HepG2 (cell line): ENCODE measurements at regions of chr12 and their contacts with region 1.

Region 1: DNA sequence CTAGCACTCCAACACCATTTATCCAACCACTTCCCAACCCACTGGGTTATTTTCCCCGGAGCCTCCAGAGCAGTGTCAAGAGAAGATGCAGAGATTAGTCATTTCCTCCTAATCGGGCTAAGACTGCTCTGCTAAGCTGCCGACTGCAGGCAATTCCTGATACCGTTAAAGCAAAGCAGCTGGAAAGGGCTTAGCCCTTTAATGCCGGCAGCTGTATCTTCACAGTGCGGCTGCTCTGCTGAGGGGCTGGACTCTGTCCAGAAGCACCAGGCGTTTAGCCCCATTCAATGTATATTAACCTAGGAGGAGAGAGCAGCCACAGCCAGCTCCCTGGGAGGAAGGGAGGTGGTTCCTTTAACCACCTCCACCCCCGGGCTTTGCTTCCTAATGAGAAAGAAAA is 11.1 kb downstream of the AQP6 start:
- DNase-seq: no peak
- ATAC-seq: no peak
- H3K4me3 ChIP-seq: no peak overlapping the region
- H3K27ac ChIP-seq: no peak overlapping the region
- H3K4me1 ChIP-seq: peaks cover 70% of the 10 kb centered on the region
- H3K27me3 ChIP-seq: no peaks in the 10 kb centered on the region
- CTCF ChIP-seq: no peak
- EP300 ChIP-seq: no peak
- POLR2A ChIP-seq: no peak
- RAD21 ChIP-seq: no peak

Region 2: GRCh38 chr12:49967042-49967776 is 16.7 kb before region 1 on chr12:
- CTCF ChIA-PET with region 1: no interaction called
- POLR2A ChIA-PET with region 1: interaction called, 24 read pairs
- in situ Hi-C with region 1: no loop called
- intact Hi-C with region 1: loop called (anchors 1 kb)
- DNase-seq: peak; percentile 71
- ATAC-seq: peak; percentile 79
- H3K4me3 ChIP-seq: peak overlapping the region; percentile 33 to 69 (median 40); a peak in 5 of 6 replicates
- H3K27ac ChIP-seq: no peak overlapping the region
- H3K4me1 ChIP-seq: peaks cover 54% of the 10 kb centered on the region
- H3K27me3 ChIP-seq: peaks cover 5 to 65% of the 10 kb centered on the region in 2 experiments
- CTCF ChIP-seq: peak; percentile 91
- EP300 ChIP-seq: no peak
- POLR2A ChIP-seq: no peak
- RAD21 ChIP-seq: peak; percentile 91

Region 3: GRCh38 chr12:50024805-50025186 is 40.9 kb after region 1 on chr12:
- CTCF ChIA-PET with region 1: no interaction called
- POLR2A ChIA-PET with region 1: interaction called, 5 read pairs
- in situ Hi-C with region 1: no loop called
- intact Hi-C with region 1: loop called (anchors 5 kb)
- DNase-seq: no peak
- ATAC-seq: peak; percentile 66
- H3K4me3 ChIP-seq: peak overlapping the region; percentile 72 to 100 (median 88)
- H3K27ac ChIP-seq: peak overlapping the region; percentile 64
- H3K4me1 ChIP-seq: peaks cover 60% of the 10 kb centered on the region
- H3K27me3 ChIP-seq: no peaks in the 10 kb centered on the region; a peak in 1 of 5 replicates
- CTCF ChIP-seq: no peak
- EP300 ChIP-seq: no peak
- POLR2A ChIP-seq: 0 out of 4 replicates have a peak, but pooled peaks of 1 of the 2 experiments have one; percentile 29
- RAD21 ChIP-seq: no peak